ENCODE measurements at regions of chr1 and their contacts with region 1.

Region 1: GRCh38 chr1:201009962-201010645 is 13.4 kb downstream of the KIF21B start:
- DNase-seq: no peak
- H3K4me3 Mint-ChIP-seq: no peak overlapping the region
- H3K27ac Mint-ChIP-seq: peak overlapping the region; percentile 15
- H3K4me1 Mint-ChIP-seq: peaks cover 56% of the 10 kb centered on the region
- H3K27me3 Mint-ChIP-seq: no peaks in the 10 kb centered on the region

Region 2: GRCh38 chr1:201023517-201023902 is 13.4 kb after region 1 on chr1 and contains the start of gene KIF21B:
- CTCF ChIA-PET with region 1: interaction called, 43 read pairs
- POLR2A ChIA-PET with region 1: interaction called, 3 read pairs
- DNase-seq: peak; percentile 92
- H3K4me3 Mint-ChIP-seq: peak within 1 kb of the TSS; percentile 91
- H3K27ac Mint-ChIP-seq: peak within 1 kb of the TSS; percentile 99
- H3K4me1 Mint-ChIP-seq: peaks cover 70% of the 10 kb centered on the region
- H3K27me3 Mint-ChIP-seq: no peaks in the 10 kb centered on the region
- total RNA-seq, gene KIF21B: 104 to 107 TPM

Region 3: GRCh38 chr1:202046227-202046801 is 1036.2 kb after region 1 on chr1:
- CTCF ChIA-PET with region 1: no interaction called
- POLR2A ChIA-PET with region 1: no interaction called
- DNase-seq: no peak
- H3K4me3 Mint-ChIP-seq: no peak overlapping the region
- H3K27ac Mint-ChIP-seq: no peak overlapping the region
- H3K4me1 Mint-ChIP-seq: peaks cover 4% of the 10 kb centered on the region
- H3K27me3 Mint-ChIP-seq: peaks cover 2% of the 10 kb centered on the region

Measured in activated CD4-positive, alpha-beta T cell treated with anti-CD3 and anti-CD28 coated beads, Interleukin-2, amount 10 ng/mL, durations not matched to agents 7 days and 5 days (primary cell).